Heart right ventricle (tissue), 16 donors: ENCODE measurements at regions of chr20 and their contacts with region 1.

Region 1: DNA sequence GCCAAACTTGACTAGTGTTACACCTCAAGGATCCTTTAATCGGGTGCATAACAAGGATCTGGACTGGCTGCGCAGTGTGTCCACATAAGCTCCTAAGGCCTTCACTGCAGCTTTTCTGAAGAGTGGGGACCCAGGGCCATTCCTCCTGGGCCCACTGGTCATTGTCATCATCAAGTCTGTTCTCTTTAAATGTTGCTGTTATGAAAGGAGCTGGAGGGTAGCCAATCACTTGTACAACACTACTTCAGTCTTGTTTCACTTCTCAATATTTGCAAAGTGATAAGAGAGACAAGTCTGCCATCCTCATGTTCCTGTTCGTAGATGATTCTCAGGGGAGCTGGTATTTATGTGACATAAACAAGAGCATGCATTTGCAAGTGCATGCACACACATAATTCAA is 149.8 kb downstream of the SYNDIG1 start:
- DNase-seq: no peak
- ATAC-seq: peak in 4 of 8 donors; percentile 16 to 51 (median 34)
- H3K4me3 ChIP-seq: no peak overlapping the region
- H3K27ac ChIP-seq: no peak overlapping the region
- H3K4me1 ChIP-seq: peaks cover 0 to 10% (median 0%) of the 10 kb centered on the region in 9 donors
- H3K27me3 ChIP-seq: no peaks in the 10 kb centered on the region
- CTCF ChIP-seq: no peak

Region 2: GRCh38 chr20:23970049-23970448 is 649.2 kb before region 1 on chr20:
- intact Hi-C with region 1: no loop called
- DNase-seq: no peak
- ATAC-seq: no peak
- H3K4me3 ChIP-seq: no peak overlapping the region
- H3K27ac ChIP-seq: no peak overlapping the region
- H3K4me1 ChIP-seq: peaks cover 0 to 19% (median 6%) of the 10 kb centered on the region in 9 donors
- H3K27me3 ChIP-seq: peaks cover 0 to 14% (median 0%) of the 10 kb centered on the region in 7 donors
- CTCF ChIP-seq: no peak

Region 3: DNA sequence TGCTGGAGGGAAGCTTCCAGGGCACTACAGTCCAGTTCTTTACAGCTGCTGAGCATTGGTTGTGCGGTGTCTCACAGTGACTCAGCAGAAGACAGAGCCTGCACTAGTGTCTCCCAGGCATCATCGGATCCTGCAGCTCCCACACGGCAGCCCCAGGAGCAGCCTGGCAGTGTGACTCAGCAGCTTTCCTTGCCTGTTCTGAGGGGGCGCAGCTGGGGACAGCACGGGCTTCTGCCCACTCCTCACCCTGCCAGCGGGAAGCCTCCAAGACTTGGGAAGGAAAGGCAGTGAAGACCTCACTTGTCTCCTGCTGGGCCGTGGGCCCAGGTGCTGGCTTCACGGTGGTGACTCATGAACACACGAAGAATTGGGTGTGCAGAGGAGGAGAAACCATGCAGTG is 15.6 kb after region 1 on chr20:
- intact Hi-C with region 1: no loop called
- DNase-seq: no peak
- ATAC-seq: peak; percentile 38 to 79 (median 66)
- H3K4me3 ChIP-seq: no peak overlapping the region
- H3K27ac ChIP-seq: no peak overlapping the region
- H3K4me1 ChIP-seq: peaks cover 0 to 12% (median 0%) of the 10 kb centered on the region in 9 donors
- H3K27me3 ChIP-seq: no peaks in the 10 kb centered on the region
- CTCF ChIP-seq: no peak

Region 4: DNA sequence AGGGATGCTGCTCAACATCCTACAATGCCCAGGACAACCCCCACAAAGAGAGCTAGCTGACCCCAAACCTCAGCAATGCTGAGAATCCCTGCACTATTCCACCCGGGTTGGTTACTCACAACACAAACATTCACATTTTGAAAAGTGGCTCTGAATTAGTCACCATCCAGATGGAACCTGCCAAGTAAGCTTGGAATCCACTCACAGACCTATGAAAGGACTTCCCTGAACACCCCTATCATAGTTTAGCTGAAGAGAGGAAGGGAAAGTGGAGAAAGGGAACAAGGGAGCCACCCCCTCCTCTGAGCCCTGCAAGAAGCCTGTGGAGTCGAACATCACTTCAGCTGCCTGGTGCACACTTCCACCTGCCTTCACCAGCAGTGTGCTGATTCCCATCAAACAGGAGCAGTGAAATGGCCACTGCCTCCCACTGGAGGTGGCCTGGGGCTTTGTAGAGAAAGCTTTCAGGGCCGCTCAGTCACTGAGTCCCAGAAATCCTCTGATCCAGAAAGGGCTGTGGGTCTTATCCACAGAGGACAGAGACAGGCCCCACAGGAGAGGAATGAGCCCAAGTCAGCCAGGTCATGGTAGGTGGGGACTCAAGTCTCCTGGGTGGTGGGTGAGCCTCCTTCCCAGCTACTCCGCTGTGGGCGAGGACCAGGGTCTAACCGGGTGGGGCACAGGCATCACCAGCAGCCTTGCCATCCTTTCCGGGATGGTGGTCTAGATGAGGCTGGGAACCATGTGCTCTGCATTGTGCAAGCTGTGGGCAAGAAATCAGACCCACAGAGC is 53.9 kb after region 1 on chr20:
- intact Hi-C with region 1: loop called in 1 of 10 experiments (anchors 10 kb)
- DNase-seq: no peak
- ATAC-seq: no peak
- H3K4me3 ChIP-seq: no peak overlapping the region
- H3K27ac ChIP-seq: no peak overlapping the region
- H3K4me1 ChIP-seq: no peaks in the 10 kb centered on the region
- H3K27me3 ChIP-seq: no peaks in the 10 kb centered on the region
- CTCF ChIP-seq: no peak

Region 5: DNA sequence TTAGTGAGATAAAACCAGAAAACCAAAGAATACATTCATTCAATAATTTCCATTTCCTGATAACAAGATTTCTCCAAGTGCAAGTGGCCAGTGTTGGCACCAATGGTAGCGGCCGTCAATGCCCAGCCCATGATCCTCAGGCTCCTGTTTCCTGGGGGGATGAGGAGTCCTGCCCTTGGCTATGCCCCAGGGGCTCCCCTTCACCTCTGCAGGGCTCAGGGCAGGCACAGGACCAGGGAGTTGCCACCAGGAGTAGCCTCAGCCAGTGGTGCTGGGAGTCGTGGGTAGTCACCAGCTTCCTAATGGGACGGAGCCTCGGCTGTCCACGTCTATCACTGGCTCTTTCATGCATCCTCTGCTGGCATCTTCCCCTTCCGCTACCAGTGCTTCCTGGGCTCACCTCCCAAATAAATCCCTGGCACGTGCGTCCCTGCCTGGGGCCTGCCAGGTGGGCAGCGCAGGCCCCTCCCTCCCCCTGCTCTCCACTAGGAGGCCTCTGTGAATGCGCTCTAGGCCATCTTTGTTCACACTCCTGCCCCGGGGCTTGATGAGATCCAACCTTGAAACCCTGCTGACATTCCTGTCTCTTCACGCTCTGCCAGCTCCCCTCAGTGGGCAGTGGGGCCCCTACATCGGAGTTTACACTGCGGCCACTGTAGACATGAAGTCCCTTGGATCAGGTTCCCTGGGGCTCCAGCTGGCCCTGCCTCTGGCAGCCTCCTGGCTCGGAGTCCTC is 65.9 kb after region 1 on chr20:
- intact Hi-C with region 1: no loop called
- DNase-seq: no peak
- ATAC-seq: no peak
- H3K4me3 ChIP-seq: no peak overlapping the region
- H3K27ac ChIP-seq: no peak overlapping the region
- H3K4me1 ChIP-seq: no peaks in the 10 kb centered on the region
- H3K27me3 ChIP-seq: peaks cover 0 to 5% (median 0%) of the 10 kb centered on the region in 7 donors
- CTCF ChIP-seq: no peak

Region 6: DNA sequence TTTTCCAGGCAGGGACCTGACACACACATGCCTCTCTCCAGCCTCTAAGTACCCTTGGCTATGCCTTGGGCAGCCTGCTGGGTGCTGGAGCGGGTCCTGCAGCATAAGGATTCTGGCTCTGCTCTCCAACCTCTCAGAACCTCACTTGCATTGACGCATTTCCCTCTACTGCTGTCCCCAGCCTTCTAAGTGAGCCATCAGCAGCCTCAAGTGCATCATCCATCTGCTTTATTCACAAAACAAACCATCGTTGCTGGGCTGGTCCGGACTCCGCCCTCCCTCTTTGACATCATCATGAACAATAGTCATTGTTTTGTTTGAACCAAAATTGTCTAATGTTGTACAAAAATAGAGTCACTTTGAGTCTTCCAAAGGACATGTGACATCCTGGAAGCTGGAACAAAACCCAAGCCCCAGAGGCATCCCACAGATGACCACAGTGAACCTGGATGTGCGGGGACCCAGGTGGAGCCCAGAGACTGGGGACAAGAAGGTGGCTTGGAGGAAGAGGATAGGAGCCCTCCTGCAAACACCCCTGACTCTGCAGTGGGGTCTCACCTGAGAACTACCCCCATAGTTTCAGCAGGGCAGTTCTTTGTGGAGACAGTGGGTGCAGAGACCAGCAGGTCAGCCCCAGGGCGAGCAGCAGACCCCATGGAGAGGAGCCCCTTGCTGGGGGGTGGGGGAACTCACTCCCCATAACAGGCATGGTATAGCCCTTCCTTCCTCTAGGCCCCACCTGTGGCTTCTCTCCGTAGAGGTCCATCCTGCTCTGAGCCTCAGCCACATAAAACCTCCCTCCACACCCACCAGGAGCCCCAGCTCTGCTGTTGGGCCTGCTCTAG is 80.3 kb after region 1 on chr20:
- intact Hi-C with region 1: no loop called
- DNase-seq: no peak
- ATAC-seq: peak in 5 of 8 donors; percentile 16 to 71 (median 58)
- H3K4me3 ChIP-seq: no peak overlapping the region
- H3K27ac ChIP-seq: peak overlapping the region in 1 of 10 donors; percentile 28
- H3K4me1 ChIP-seq: peaks cover 0 to 10% (median 6%) of the 10 kb centered on the region in 9 donors
- H3K27me3 ChIP-seq: peaks cover 0 to 6% (median 0%) of the 10 kb centered on the region in 7 donors
- CTCF ChIP-seq: no peak